Right cardiac atrium (tissue), 5 donors: ENCODE measurements at regions of chr5 and their contacts with region 1.

Region 1: DNA sequence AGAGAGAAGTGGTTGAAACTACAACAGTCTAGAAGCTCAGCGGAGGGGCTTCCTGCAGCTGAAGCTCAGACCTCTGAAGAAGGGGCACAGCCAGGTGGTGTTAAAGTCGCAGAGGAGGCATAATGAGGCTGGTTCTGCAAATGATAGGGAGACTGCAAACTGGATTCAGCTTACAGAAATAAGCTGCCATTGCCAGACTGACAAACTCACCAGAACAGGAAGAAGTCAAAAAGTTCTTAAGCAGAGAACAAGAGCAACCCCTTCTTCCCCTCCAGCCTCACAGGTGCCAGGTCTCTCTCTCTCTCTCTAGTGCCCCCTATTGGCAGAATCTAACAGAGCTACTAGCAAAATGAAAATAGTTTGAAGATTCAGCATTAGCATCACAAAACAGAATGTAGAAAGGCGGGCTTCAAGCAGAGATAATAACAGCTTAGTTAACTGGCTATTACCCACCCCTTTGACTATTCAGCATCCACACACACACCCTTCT is 76.7 kb downstream of the GRAMD2B start:
- DNase-seq: no peak
- ATAC-seq: no peak
- H3K4me3 ChIP-seq: no peak overlapping the region
- H3K27ac ChIP-seq: no peak overlapping the region
- H3K4me1 ChIP-seq: peaks cover 2% of the 10 kb centered on the region
- H3K27me3 ChIP-seq: no peaks in the 10 kb centered on the region

Region 2: DNA sequence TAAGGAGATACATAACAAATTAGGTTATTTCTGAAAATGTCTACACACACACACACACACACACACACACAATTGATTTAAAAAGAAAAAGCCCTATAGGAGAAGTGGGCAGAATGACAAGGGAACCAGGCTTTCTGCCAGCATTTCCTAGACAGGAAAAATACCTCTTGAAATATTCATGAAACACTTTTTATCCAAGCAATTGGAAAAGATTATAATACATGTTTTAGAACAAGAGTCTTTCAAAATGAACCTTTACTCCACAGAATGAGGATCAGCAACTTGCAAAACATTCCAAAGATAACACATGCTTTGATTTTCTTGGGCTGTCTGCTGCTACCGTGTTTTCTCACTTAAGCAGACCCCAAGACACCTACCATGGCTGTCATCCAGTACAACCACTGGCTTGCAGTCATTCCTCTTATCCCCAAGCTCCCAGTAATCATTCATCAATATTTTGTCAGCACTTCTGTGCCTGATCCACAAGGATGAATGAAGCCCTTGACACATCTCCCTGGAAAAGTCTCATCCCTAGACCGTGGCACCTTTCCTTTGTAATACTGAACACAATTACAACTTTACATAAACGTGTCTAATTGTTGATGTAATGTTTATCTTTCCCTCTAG is 1036.3 kb before region 1 on chr5:
- intact Hi-C with region 1: no loop called
- DNase-seq: no peak
- ATAC-seq: no peak
- H3K4me3 ChIP-seq: no peak overlapping the region
- H3K27ac ChIP-seq: no peak overlapping the region
- H3K4me1 ChIP-seq: no peaks in the 10 kb centered on the region
- H3K27me3 ChIP-seq: no peaks in the 10 kb centered on the region

Region 3: GRCh38 chr5:126536874-126537273 is 37.0 kb after region 1 on chr5:
- intact Hi-C with region 1: loop called in 1 of 4 experiments (anchors 5 kb)
- DNase-seq: no peak
- ATAC-seq: no peak
- H3K4me3 ChIP-seq: no peak overlapping the region
- H3K27ac ChIP-seq: no peak overlapping the region
- H3K4me1 ChIP-seq: peaks cover 2% of the 10 kb centered on the region
- H3K27me3 ChIP-seq: no peaks in the 10 kb centered on the region

Region 4: GRCh38 chr5:127216898-127217675 is 717.2 kb after region 1 on chr5:
- intact Hi-C with region 1: no loop called
- DNase-seq: no peak
- ATAC-seq: no peak
- H3K4me3 ChIP-seq: no peak overlapping the region
- H3K27ac ChIP-seq: no peak overlapping the region
- H3K4me1 ChIP-seq: no peaks in the 10 kb centered on the region
- H3K27me3 ChIP-seq: no peaks in the 10 kb centered on the region